ENCODE measurements at regions of chr18 and their contacts with region 1.

Region 1: DNA sequence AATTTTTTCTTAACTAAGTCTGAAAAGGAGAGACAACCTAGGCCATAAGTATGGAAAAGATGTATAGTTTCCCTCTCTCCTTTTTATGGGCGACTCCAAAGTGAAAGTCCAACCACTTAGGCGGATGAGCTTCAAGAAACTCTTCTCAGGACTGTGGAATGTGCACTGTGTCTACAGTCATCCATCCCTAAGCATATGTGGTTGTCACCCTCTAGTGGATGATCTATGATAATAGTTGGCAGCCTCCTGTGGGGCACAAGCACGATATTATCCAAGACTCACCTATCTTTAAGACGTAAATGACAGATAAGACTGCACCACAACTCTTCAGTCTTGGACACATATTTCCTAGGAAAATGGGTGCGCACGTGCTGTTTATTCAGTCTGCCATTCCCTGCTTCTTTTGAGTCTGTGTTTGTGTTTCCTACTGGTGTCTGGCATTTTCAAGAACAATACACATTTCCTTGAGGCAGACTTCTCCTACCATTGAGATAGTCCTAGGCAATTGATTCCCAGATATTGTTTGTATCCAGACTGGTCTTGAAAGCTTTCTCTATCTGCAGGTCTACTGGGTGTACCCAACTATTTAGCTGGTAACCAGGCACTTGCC is 145.5 kb upstream of the CTAGE1 start:
- DNase-seq: no peak
- H3K4me3 Mint-ChIP-seq: no peak overlapping the region
- H3K27ac Mint-ChIP-seq: no peak overlapping the region
- H3K4me1 Mint-ChIP-seq: no peaks in the 10 kb centered on the region
- H3K27me3 Mint-ChIP-seq: peaks cover 21% of the 10 kb centered on the region

Region 2: GRCh38 chr18:21997207-21998143 is 565.7 kb before region 1 on chr18:
- intact Hi-C with region 1: loop called (anchors 10 kb)
- DNase-seq: no peak
- H3K4me3 Mint-ChIP-seq: no peak overlapping the region
- H3K27ac Mint-ChIP-seq: no peak overlapping the region
- H3K4me1 Mint-ChIP-seq: peaks cover 5% of the 10 kb centered on the region
- H3K27me3 Mint-ChIP-seq: no peaks in the 10 kb centered on the region

Region 3: GRCh38 chr18:22169007-22169864 is 394.0 kb before region 1 on chr18 and contains the start of gene GATA6:
- intact Hi-C with region 1: loop called (anchors 2 kb)
- DNase-seq: no peak
- H3K4me3 Mint-ChIP-seq: peak within 1 kb of the TSS; percentile 85
- H3K27ac Mint-ChIP-seq: peak within 1 kb of the TSS; percentile 58
- H3K4me1 Mint-ChIP-seq: no peaks in the 10 kb centered on the region
- H3K27me3 Mint-ChIP-seq: peaks cover 67% of the 10 kb centered on the region
- total RNA-seq, gene GATA6: not detected in 2 replicates